ENCODE measurements at regions of chr1 and their contacts with region 1.

Region 1: DNA sequence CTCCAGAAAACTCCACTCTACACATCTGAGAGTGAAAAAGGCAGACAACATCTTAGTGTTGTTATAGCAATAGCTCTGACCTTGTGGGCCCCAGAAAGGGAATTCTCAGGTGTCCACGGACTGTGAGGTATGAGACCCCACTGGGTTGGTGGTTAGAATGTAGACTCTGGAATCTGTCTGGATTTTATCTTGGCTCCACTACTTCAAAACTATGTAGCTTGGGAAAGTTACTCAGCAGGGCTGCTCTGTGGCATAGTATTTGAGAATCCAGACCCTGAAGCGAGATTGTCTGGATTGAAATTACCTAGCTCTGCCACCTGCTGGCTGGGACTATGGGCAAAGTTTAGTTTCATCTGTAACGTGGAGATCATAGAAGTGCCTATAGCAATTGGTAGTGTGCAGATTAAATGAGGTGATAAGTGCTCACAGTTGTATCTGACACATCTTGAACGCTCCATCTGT is 25.8 kb downstream of the PRDM2 start:
- DNase-seq: peak; percentile 36 to 82 (median 68)
- ATAC-seq: peak; percentile 50
- H3K4me3 ChIP-seq: no peak overlapping the region
- H3K4me3 Mint-ChIP-seq: no peak overlapping the region
- H3K27ac ChIP-seq: no peak overlapping the region
- H3K27ac Mint-ChIP-seq: peak overlapping the region; percentile 77
- H3K4me1 ChIP-seq: peaks cover 45% of the 10 kb centered on the region
- H3K4me1 Mint-ChIP-seq: peaks cover 79% of the 10 kb centered on the region
- H3K27me3 ChIP-seq: no peaks in the 10 kb centered on the region
- H3K27me3 Mint-ChIP-seq: no peaks in the 10 kb centered on the region
- CTCF ChIP-seq: peak; percentile 56

Region 2: DNA sequence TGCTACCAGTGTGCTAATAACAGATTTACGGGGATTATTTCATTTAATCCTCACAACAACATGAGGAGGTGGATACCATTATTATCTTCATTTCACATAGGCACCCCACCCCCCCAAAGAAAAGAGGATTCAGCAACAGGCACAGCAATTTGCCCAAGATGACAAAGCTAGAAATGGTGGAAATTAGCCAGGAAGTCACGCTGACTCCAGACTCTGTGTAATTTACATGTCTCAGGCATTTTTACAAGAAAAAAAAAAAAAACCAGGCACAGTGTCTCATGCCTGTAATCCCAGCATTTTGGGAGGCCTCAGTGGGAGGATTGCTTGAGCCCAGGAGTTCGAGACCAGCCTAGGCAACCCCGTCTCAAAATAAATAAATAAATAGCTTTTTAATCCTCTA is 63.3 kb before region 1 on chr1:
- CTCF ChIA-PET with region 1: interaction called, 86 read pairs
- POLR2A ChIA-PET with region 1: interaction called, 7 read pairs
- intact Hi-C with region 1: loop called (anchors 1 kb)
- DNase-seq: no peak
- ATAC-seq: no peak
- H3K4me3 ChIP-seq: no peak overlapping the region
- H3K4me3 Mint-ChIP-seq: no peak overlapping the region
- H3K27ac ChIP-seq: no peak overlapping the region
- H3K27ac Mint-ChIP-seq: no peak overlapping the region
- H3K4me1 ChIP-seq: peaks cover 4% of the 10 kb centered on the region
- H3K4me1 Mint-ChIP-seq: peaks cover 5% of the 10 kb centered on the region
- H3K27me3 ChIP-seq: no peaks in the 10 kb centered on the region
- H3K27me3 Mint-ChIP-seq: peaks cover 5% of the 10 kb centered on the region
- CTCF ChIP-seq: no peak

Region 3: GRCh38 chr1:13699936-13700520 is 25.7 kb before region 1 on chr1 and contains the start of gene PRDM2:
- CTCF ChIA-PET with region 1: interaction called, 35 read pairs
- POLR2A ChIA-PET with region 1: interaction called, 6 read pairs
- intact Hi-C with region 1: loop called in 1 of 2 experiments (anchors 2 kb)
- DNase-seq: peak; percentile 38 to 85 (median 65)
- ATAC-seq: peak; percentile 43
- H3K4me3 ChIP-seq: peak within 1 kb of the TSS; percentile 67 to 80
- H3K4me3 Mint-ChIP-seq: peak within 1 kb of the TSS; percentile 92
- H3K27ac ChIP-seq: peak within 1 kb of the TSS; percentile 94 to 99
- H3K27ac Mint-ChIP-seq: peak within 1 kb of the TSS; percentile 98
- H3K4me1 ChIP-seq: peaks cover 44% of the 10 kb centered on the region
- H3K4me1 Mint-ChIP-seq: peaks cover 52% of the 10 kb centered on the region
- H3K27me3 ChIP-seq: no peaks in the 10 kb centered on the region
- H3K27me3 Mint-ChIP-seq: no peaks in the 10 kb centered on the region
- CTCF ChIP-seq: no peak
- total RNA-seq, gene PRDM2: 170 to 180 TPM

Region 4: GRCh38 chr1:13748610-13749505 is 23.1 kb after region 1 on chr1:
- CTCF ChIA-PET with region 1: interaction called, 14 read pairs
- POLR2A ChIA-PET with region 1: interaction called, 21 read pairs
- intact Hi-C with region 1: no loop called
- DNase-seq: peak; percentile 92 to 99 (median 97)
- ATAC-seq: peak; percentile 84
- H3K4me3 ChIP-seq: peak overlapping the region; percentile 68 to 70
- H3K4me3 Mint-ChIP-seq: peak overlapping the region; percentile 94
- H3K27ac ChIP-seq: peak overlapping the region; percentile 86 to 88
- H3K27ac Mint-ChIP-seq: peak overlapping the region; percentile 98
- H3K4me1 ChIP-seq: peaks cover 48% of the 10 kb centered on the region
- H3K4me1 Mint-ChIP-seq: peaks cover 52% of the 10 kb centered on the region
- H3K27me3 ChIP-seq: no peaks in the 10 kb centered on the region
- H3K27me3 Mint-ChIP-seq: no peaks in the 10 kb centered on the region
- CTCF ChIP-seq: no peak

Region 5: GRCh38 chr1:13960375-13960987 is 234.7 kb after region 1 on chr1:
- CTCF ChIA-PET with region 1: interaction called, 6 read pairs
- POLR2A ChIA-PET with region 1: no interaction called
- intact Hi-C with region 1: loop called in 1 of 2 experiments (anchors 5 kb)
- DNase-seq: peak; percentile 32 to 78 (median 66)
- ATAC-seq: no peak
- H3K4me3 ChIP-seq: no peak overlapping the region
- H3K4me3 Mint-ChIP-seq: no peak overlapping the region
- H3K27ac ChIP-seq: no peak overlapping the region
- H3K27ac Mint-ChIP-seq: no peak overlapping the region
- H3K4me1 ChIP-seq: no peaks in the 10 kb centered on the region
- H3K4me1 Mint-ChIP-seq: no peaks in the 10 kb centered on the region
- H3K27me3 ChIP-seq: no peaks in the 10 kb centered on the region
- H3K27me3 Mint-ChIP-seq: peaks cover 47% of the 10 kb centered on the region
- CTCF ChIP-seq: peak; percentile 81

Region 6: GRCh38 chr1:14128096-14128495 is 402.4 kb after region 1 on chr1:
- CTCF ChIA-PET with region 1: no interaction called
- POLR2A ChIA-PET with region 1: no interaction called
- intact Hi-C with region 1: no loop called
- DNase-seq: no peak
- ATAC-seq: no peak
- H3K4me3 ChIP-seq: no peak overlapping the region
- H3K4me3 Mint-ChIP-seq: no peak overlapping the region
- H3K27ac ChIP-seq: no peak overlapping the region
- H3K27ac Mint-ChIP-seq: no peak overlapping the region
- H3K4me1 ChIP-seq: no peaks in the 10 kb centered on the region
- H3K4me1 Mint-ChIP-seq: no peaks in the 10 kb centered on the region
- H3K27me3 ChIP-seq: peaks cover 0 to 2% of the 10 kb centered on the region in 2 experiments
- H3K27me3 Mint-ChIP-seq: peaks cover 2% of the 10 kb centered on the region
- CTCF ChIP-seq: no peak

Region 7: DNA sequence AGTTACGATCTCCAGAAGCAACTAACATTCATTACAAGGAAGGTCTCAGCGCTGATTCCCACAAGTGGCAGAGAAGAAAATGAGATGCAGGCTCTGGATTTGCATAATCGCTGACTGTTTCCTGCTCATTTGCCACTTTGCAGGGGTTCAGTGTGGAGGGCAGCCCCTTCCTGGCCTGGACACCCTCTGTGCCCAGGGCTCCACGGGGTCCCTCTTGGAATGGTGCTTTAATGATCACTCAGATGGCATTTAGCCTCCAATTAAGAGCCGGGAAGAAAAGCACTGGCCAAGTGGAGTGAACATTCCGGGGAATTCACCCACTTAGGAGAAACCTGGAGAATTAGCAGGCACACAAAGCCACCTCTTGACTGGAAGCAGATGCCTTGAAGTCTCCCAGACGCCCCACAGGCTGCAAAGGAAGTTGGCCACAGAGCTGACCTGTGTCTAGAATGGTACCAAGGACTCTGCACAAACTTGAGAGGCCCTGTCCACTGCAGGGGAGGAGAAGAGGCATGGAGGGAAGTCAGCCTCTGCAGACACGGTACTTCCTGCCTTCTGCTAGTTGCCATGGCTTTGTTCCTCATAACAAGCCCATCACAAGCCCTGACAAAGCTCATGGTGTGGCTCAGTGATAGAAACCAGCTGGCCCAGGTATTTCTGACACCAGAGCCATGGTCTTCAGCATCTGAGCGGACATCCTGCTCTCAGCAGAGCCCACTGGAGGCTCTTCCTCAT is 1029.9 kb after region 1 on chr1:
- CTCF ChIA-PET with region 1: no interaction called
- POLR2A ChIA-PET with region 1: no interaction called
- intact Hi-C with region 1: no loop called
- DNase-seq: no peak
- ATAC-seq: no peak
- H3K4me3 ChIP-seq: no peak overlapping the region
- H3K4me3 Mint-ChIP-seq: no peak overlapping the region
- H3K27ac ChIP-seq: no peak overlapping the region
- H3K27ac Mint-ChIP-seq: no peak overlapping the region
- H3K4me1 ChIP-seq: no peaks in the 10 kb centered on the region
- H3K4me1 Mint-ChIP-seq: no peaks in the 10 kb centered on the region
- H3K27me3 ChIP-seq: no peaks in the 10 kb centered on the region
- H3K27me3 Mint-ChIP-seq: no peaks in the 10 kb centered on the region
- CTCF ChIP-seq: no peak